ENCODE measurements at regions of chrX and their contacts with region 1.

Region 1: DNA sequence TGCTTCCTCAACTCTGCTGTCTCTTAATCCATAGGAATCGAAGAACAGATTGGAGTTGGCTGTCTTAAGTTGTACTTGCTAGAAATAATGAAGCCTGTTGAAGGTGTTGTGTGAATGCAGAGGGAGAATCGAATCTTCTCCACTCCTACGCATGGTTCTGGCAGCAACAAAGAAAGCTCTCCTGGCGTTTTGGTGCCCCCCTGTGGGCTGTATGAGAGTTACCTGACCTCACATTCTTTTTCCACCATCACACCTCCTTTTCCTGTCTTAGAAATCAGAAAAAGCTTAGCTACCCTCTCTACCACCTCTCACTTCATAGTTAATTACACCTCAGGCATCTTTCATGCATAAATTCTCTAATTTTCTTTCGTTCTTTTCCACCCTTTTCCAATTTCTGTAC is 16.3 kb downstream of the KLF8 start:
- DNase-seq: peak; percentile 5
- ATAC-seq: peak; percentile 78
- H3K4me3 ChIP-seq: no peak overlapping the region
- H3K27ac ChIP-seq: no peak overlapping the region
- H3K4me1 ChIP-seq: no peaks in the 10 kb centered on the region
- H3K27me3 ChIP-seq: no peaks in the 10 kb centered on the region
- CTCF ChIP-seq: peak; percentile 70
- EP300 ChIP-seq: no peak
- POLR2A ChIP-seq: no peak
- RAD21 ChIP-seq: peak; percentile 14; the same call in 1 of the 2 replicates

Region 2: DNA sequence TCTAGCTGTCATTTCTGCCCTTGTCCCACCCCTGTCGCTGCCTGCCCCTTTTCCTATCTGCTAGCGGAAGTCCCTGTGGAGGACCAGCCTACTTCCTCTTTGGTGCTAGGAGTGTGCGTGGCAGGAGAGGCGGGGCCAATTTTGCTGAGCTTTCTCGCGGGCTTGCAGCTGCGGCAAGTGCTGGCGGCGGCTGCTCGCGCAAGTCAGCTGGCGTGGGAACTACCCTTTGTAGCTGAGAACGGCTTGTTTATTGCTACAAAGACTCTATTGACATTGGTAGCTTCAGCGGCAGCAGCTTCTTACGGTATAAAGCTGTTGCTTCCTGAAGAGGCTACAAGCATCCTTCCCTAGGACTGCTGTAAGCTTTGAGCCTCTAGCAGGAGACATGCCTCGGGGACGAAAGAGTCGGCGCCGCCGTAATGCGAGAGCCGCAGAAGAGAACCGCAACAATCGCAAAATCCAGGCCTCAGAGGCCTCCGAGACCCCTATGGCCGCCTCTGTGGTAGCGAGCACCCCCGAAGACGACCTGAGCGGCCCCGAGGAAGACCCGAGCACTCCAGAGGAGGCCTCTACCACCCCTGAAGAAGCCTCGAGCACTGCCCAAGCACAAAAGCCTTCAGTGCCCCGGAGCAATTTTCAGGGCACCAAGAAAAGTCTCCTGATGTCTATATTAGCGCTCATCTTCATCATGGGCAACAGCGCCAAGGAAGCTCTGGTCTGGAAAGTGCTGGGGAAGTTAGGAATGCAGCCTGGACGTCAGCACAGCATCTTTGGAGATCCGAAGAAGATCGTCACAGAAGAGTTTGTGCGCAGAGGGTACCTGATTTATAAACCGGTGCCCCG is 796.3 kb before region 1 on chrX and contains the start of gene MAGEH1:
- CTCF ChIA-PET with region 1: no interaction called
- POLR2A ChIA-PET with region 1: no interaction called
- in situ Hi-C with region 1: loop called (anchors 25 kb)
- intact Hi-C with region 1: no loop called
- DNase-seq: peak; percentile 52
- ATAC-seq: peak; percentile 98
- H3K4me3 ChIP-seq: peak within 1 kb of the TSS; percentile 49 to 64 (median 62); a peak in 5 of 6 replicates
- H3K27ac ChIP-seq: no peak within 1 kb of the TSS
- H3K4me1 ChIP-seq: no peaks in the 10 kb centered on the region
- H3K27me3 ChIP-seq: no peaks in the 10 kb centered on the region
- CTCF ChIP-seq: no peak
- EP300 ChIP-seq: no peak
- POLR2A ChIP-seq: no peak
- RAD21 ChIP-seq: no peak
- total RNA-seq, gene MAGEH1: 3.0 and 5.0 TPM in 2 replicates

Region 3: GRCh38 chrX:55717521-55718497 is 530.7 kb before region 1 on chrX and contains the start of gene RRAGB:
- CTCF ChIA-PET with region 1: no interaction called
- POLR2A ChIA-PET with region 1: no interaction called
- in situ Hi-C with region 1: no loop called
- intact Hi-C with region 1: loop called (anchors 5 kb)
- DNase-seq: peak; percentile 92
- ATAC-seq: peak; percentile 98
- H3K4me3 ChIP-seq: peak within 1 kb of the TSS; percentile 61 to 80 (median 74)
- H3K27ac ChIP-seq: peak within 1 kb of the TSS; percentile 79
- H3K4me1 ChIP-seq: peaks cover 12% of the 10 kb centered on the region
- H3K27me3 ChIP-seq: no peaks in the 10 kb centered on the region
- CTCF ChIP-seq: peak; percentile 63
- EP300 ChIP-seq: no peak
- POLR2A ChIP-seq: peak; percentile 70 to 76
- RAD21 ChIP-seq: no peak; the same call in 1 of the 2 replicates
- total RNA-seq, gene RRAGB: 11.2 and 12.2 TPM in 2 replicates